Activated CD4-positive, alpha-beta T cell treated with anti-CD3 and anti-CD28 coated beads for 36 hours (primary cell): ENCODE measurements at regions of chr17 and their contacts with region 1.

Region 1: GRCh38 chr17:57987580-57988421 is at the start of gene VEZF1:
- DNase-seq: peak; percentile 88
- ATAC-seq: peak; percentile 68
- H3K4me3 Mint-ChIP-seq: peak within 1 kb of the TSS; percentile 89
- H3K27ac Mint-ChIP-seq: peak within 1 kb of the TSS; percentile 95
- H3K4me1 Mint-ChIP-seq: peaks cover 56% of the 10 kb centered on the region
- H3K27me3 Mint-ChIP-seq: no peaks in the 10 kb centered on the region
- total RNA-seq, gene VEZF1: 21.3 to 26.3 TPM

Region 2: DNA sequence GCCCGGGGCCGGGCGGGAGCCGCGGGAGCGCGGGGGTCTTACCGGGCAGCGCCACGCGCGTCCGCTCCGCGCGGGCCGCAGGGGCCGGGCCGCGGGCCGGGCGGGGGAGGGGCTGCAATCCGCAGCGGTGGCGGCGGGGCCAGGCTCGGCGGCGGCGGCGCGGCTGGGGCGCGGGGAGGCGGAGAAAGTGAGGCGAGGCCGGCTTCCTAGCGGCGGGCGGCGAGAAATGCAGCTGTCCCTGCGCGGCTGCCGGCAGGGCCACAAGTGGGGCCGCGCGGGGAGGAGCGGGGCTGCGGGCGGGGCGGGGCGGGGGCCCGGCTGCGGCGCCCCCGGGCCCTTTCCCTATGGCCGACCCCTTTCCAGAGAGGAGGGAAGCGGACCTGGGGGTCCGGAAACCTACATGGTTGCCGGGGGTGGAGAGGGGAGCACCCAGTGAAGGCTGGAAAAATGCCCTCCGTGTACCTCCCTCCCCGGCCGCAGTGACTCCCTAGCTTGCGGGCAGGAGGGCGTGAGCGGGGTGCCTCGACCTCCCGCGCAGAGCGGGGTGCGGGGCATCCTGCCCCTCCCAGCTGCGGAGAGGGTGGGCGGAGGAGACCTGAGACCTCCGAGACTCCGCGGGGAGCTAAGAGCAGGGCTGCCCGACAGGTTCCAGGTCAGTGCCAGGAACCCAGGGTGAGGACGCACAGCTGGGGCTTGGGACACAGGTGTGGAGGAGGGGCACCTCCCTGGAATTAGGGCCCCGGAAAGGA is 32.4 kb before region 1 on chr17 and contains the start of gene CUEDC1:
- CTCF ChIA-PET with region 1: interaction called, 8 read pairs
- POLR2A ChIA-PET with region 1: interaction called, 3 read pairs
- intact Hi-C with region 1: loop called (anchors 1 to 5 kb)
- DNase-seq: peak; percentile 82
- ATAC-seq: peak; percentile 85
- H3K4me3 Mint-ChIP-seq: peak within 1 kb of the TSS; percentile 56
- H3K27ac Mint-ChIP-seq: no peak within 1 kb of the TSS
- H3K4me1 Mint-ChIP-seq: peaks cover 23% of the 10 kb centered on the region
- H3K27me3 Mint-ChIP-seq: peaks cover 33% of the 10 kb centered on the region
- total RNA-seq, gene CUEDC1: 0.14 TPM in 1 of 2 experiments, not detected in the other

Region 3: DNA sequence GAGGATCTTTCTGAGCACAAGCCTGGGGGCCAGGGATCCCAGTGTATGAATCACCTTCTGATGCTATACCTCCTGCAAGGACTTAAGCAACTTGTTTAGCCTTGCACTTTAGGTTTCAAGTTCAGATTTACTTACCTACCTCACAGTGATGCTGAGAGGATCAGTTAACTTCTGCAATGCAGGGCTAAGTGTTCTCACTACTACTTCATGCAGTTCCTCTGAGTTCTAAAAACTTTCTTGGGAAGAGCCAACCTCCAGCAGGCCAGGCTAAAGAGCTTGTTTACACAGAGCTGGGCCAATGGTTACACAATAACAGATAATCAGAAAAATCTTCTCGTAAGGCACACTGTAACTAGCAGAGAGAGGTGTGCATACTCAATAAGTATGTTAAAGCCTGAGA is 12.8 kb before region 1 on chr17:
- CTCF ChIA-PET with region 1: interaction called, 14 read pairs
- POLR2A ChIA-PET with region 1: no interaction called
- intact Hi-C with region 1: no loop called
- DNase-seq: no peak
- ATAC-seq: no peak
- H3K4me3 Mint-ChIP-seq: no peak overlapping the region
- H3K27ac Mint-ChIP-seq: no peak overlapping the region
- H3K4me1 Mint-ChIP-seq: peaks cover 3% of the 10 kb centered on the region
- H3K27me3 Mint-ChIP-seq: no peaks in the 10 kb centered on the region

Region 4: GRCh38 chr17:58232707-58233156 is 244.9 kb after region 1 on chr17:
- CTCF ChIA-PET with region 1: no interaction called
- POLR2A ChIA-PET with region 1: no interaction called
- intact Hi-C with region 1: no loop called
- DNase-seq: peak; percentile 72
- ATAC-seq: peak; percentile 96
- H3K4me3 Mint-ChIP-seq: no peak overlapping the region
- H3K27ac Mint-ChIP-seq: no peak overlapping the region
- H3K4me1 Mint-ChIP-seq: peaks cover 9% of the 10 kb centered on the region
- H3K27me3 Mint-ChIP-seq: peaks cover 28% of the 10 kb centered on the region

Region 5: DNA sequence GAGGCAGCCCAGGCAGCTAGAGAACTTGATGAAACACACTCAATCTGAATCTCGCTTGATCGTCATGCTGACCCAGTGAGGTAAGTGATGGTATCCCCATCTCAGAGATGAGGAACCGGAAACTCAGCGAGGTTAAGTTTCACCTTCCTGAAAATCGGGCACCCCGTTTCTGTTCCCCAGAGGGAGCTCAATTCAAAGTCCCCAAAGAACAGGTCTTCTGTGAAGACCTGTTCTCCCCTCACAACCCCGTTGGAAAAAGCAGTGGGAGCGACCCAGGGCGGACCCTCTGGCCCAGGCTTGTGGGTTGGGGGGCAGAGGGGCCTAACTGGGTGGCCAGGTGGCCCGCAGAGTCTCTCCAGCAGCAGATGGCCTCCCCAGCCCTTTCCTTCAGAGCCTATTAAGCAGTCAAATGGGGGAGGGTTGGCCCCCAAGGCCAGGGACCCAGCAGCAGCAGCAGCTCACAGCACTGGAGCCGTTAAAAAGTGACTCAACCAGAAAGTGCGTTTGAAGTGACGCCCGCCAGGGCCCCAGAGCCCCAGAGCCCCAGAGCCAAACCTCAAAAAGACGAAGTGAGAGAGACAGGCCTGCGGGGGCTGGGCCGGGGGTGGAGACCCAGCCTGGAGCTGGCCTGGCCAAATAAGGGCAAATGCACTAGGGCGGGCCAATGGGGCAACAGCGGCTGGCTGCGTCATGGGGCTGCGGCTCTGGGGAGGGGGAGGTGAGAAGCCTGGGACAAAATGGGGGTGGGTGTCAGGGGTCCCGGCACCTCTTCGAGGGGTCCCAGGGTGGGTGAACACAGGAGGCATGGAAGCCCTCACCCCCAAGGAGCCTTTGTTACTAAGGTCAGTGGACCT is 350.0 kb after region 1 on chr17:
- CTCF ChIA-PET with region 1: no interaction called
- POLR2A ChIA-PET with region 1: no interaction called
- intact Hi-C with region 1: loop called in 1 of 2 experiments (anchors 5 kb)
- DNase-seq: peak; percentile 97
- ATAC-seq: peak; percentile 57
- H3K4me3 Mint-ChIP-seq: peak overlapping the region; percentile 100
- H3K27ac Mint-ChIP-seq: peak overlapping the region; percentile 99
- H3K4me1 Mint-ChIP-seq: peaks cover 26% of the 10 kb centered on the region
- H3K27me3 Mint-ChIP-seq: no peaks in the 10 kb centered on the region